ENCODE measurements at regions of chr5 and their contacts with region 1.

Region 1: DNA sequence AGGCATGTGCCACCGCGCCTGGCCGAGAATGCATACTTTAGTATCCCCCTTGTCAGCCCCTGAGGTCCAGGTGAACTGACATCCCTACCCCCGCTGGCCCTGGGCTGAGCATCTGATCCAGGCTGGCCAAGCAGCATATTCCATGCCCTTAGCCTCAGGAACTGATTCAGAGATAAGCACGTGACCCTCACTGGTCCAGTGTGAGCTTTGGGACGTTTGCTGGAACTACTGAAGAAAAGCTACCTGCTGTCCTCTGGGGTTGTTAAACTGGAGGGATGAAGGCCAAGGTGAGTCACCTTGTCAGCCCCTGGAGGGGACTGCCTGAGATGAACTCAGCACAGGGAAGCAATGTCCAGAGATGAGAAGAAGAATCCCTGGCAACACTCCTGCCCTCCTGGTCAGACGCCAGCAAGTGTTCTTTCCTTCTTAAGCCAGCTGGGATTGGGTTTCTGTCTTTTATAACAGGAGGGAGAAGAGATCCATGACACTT is 59.1 kb upstream of the FBXW11 start:
- DNase-seq: no peak
- H3K4me3 ChIP-seq: no peak overlapping the region
- H3K27ac ChIP-seq: no peak overlapping the region
- H3K4me1 ChIP-seq: no peaks in the 10 kb centered on the region
- CTCF ChIP-seq: no peak

Region 2: GRCh38 chr5:172266676-172267092 is 201.1 kb after region 1 on chr5:
- CTCF ChIA-PET with region 1: no interaction called
- POLR2A ChIA-PET with region 1: interaction called, 10 read pairs
- intact Hi-C with region 1: no loop called
- DNase-seq: no peak
- H3K4me3 ChIP-seq: no peak overlapping the region
- H3K27ac ChIP-seq: no peak overlapping the region
- H3K4me1 ChIP-seq: peaks cover 10% of the 10 kb centered on the region
- CTCF ChIP-seq: no peak

Measured in OCI-LY7 (cell line).